ENCODE measurements at regions of chr19 and their contacts with region 1.

Region 1: GRCh38 chr19:46850228-46851203 is at the start of gene AP2S1:
- DNase-seq: peak; percentile 96 to 97
- ATAC-seq: peak; percentile 99 to 100
- H3K4me3 ChIP-seq: peak within 1 kb of the TSS; percentile 84 to 97 (median 91)
- H3K27ac ChIP-seq: peak within 1 kb of the TSS; percentile 90 to 95 (median 92)
- H3K4me1 ChIP-seq: peaks cover 11 to 12% of the 10 kb centered on the region in 2 donors
- H3K27me3 ChIP-seq: no peaks in the 10 kb centered on the region
- CTCF ChIP-seq: peak in 2 of 5 experiments; percentile 22 to 28
- POLR2A ChIP-seq: peak; percentile 65 to 78
- total RNA-seq, gene AP2S1: 42.7 to 94.1 (median 64.9) TPM

Region 2: DNA sequence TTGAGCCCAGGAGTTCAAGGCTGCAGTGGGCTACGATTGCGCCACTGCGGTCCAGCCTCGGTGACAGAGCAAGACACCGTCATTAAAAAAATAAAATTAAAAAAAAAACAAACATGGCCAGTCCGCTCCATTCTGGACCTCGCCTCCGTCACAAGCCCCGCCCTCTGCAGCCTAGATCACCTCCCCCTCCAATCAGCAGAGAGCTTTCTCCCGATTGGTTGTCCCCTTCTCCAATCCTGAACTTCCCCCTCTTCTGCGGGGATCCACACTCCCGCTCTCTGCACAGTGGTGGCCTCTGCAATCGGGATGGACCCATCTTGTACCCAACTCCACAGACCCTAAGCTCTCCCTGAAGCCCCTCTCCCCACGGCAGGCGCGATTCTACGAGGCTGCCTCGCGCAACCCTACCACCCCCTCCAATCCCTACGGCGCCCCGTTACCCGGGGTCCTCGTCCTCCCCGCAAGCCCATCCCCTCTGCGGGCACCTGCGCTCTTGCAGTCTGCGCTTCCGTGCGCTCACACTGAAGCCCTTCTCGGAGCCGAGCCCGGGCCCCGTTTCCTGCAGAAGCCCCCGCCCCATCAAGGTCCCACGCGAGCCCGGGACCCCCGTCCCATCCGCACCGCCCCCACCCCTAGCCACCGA is 197.4 kb after region 1 on chr19:
- in situ Hi-C with region 1: no loop called
- intact Hi-C with region 1: loop called (anchors 1 kb)
- DNase-seq: peak; percentile 78 to 85
- ATAC-seq: peak; percentile 88 to 90
- H3K4me3 ChIP-seq: peak overlapping the region; percentile 87 to 100 (median 94)
- H3K27ac ChIP-seq: peak overlapping the region; percentile 83 to 96 (median 92)
- H3K4me1 ChIP-seq: peaks cover 5 to 8% of the 10 kb centered on the region in 2 donors
- H3K27me3 ChIP-seq: no peaks in the 10 kb centered on the region
- CTCF ChIP-seq: no peak
- POLR2A ChIP-seq: peak; percentile 4 to 36